ENCODE measurements at regions of chr1 and their contacts with region 1.

Region 1: DNA sequence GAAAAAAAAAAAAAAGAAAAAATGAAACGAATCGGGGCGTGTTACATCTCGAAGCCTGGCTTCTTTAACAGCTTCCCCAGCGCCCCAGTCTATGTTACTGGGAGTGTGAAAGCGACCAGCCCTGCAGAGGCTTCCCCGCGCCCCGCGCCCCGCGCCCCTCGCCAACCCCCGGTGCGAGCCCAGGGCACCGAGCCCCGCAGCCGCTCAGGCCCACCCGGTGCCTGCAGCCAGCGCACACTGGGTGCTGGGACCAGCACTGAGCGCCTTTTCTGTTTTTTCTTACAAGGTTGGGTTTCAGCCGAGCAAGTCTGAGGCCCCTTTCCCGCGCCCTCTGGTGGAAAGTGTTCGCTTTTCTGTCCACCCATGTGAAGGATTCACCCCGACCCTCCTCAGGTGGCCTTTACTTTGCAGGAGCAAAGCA is 42.1 kb upstream of the ZNF496 start:
- DNase-seq: peak; percentile 29
- CTCF ChIP-seq: peak; percentile 39

Region 2: GRCh38 chr1:247198781-247199180 is 174.9 kb before region 1 on chr1:
- CTCF ChIA-PET with region 1: no interaction called
- POLR2A ChIA-PET with region 1: no interaction called
- DNase-seq: no peak
- CTCF ChIP-seq: no peak

Region 3: GRCh38 chr1:247350587-247350986 is 23.1 kb before region 1 on chr1:
- CTCF ChIA-PET with region 1: interaction called, 11 read pairs
- POLR2A ChIA-PET with region 1: no interaction called
- DNase-seq: no peak
- CTCF ChIP-seq: no peak

Region 4: GRCh38 chr1:247360991-247361731 is 12.6 kb before region 1 on chr1:
- CTCF ChIA-PET with region 1: interaction called, 25 read pairs
- POLR2A ChIA-PET with region 1: no interaction called
- DNase-seq: no peak
- CTCF ChIP-seq: no peak

Region 5: GRCh38 chr1:247390116-247390791 is 16.5 kb after region 1 on chr1:
- CTCF ChIA-PET with region 1: interaction called, 57 read pairs
- POLR2A ChIA-PET with region 1: no interaction called
- DNase-seq: peak; percentile 88
- CTCF ChIP-seq: peak; percentile 85

Region 6: GRCh38 chr1:247487057-247487456 is 113.3 kb after region 1 on chr1:
- CTCF ChIA-PET with region 1: interaction called, 83 read pairs
- POLR2A ChIA-PET with region 1: no interaction called
- DNase-seq: peak; percentile 64
- CTCF ChIP-seq: peak; percentile 73

Measured in GM10248 (cell line).